ENCODE measurements at regions of chr20 and their contacts with region 1.

Region 1: GRCh38 chr20:49699200-49699992 is 14.3 kb downstream of the B4GALT5 start:
- DNase-seq: peak; percentile 67
- ATAC-seq: no peak
- H3K4me3 ChIP-seq: no peak overlapping the region
- H3K27ac ChIP-seq: no peak overlapping the region
- H3K4me1 ChIP-seq: peaks cover 12% of the 10 kb centered on the region
- H3K27me3 ChIP-seq: no peaks in the 10 kb centered on the region
- CTCF ChIP-seq: no peak
- POLR2A ChIP-seq: no peak
- RAD21 ChIP-seq: no peak

Region 2: GRCh38 chr20:49262444-49262843 is 437.0 kb before region 1 on chr20:
- CTCF ChIA-PET with region 1: no interaction called
- POLR2A ChIA-PET with region 1: interaction called, 17 read pairs
- dilution Hi-C with region 1: no loop called
- in situ Hi-C with region 1: no loop called
- intact Hi-C with region 1: no loop called
- DNase-seq: no peak
- ATAC-seq: no peak
- H3K4me3 ChIP-seq: no peak overlapping the region
- H3K27ac ChIP-seq: no peak overlapping the region
- H3K4me1 ChIP-seq: no peaks in the 10 kb centered on the region; the same call in 1 of the 2 replicates
- H3K27me3 ChIP-seq: no peaks in the 10 kb centered on the region
- CTCF ChIP-seq: no peak
- POLR2A ChIP-seq: no peak
- RAD21 ChIP-seq: no peak

Region 3: GRCh38 chr20:49559401-49560081 is 139.9 kb before region 1 on chr20:
- CTCF ChIA-PET with region 1: interaction called, 10 read pairs
- POLR2A ChIA-PET with region 1: no interaction called
- dilution Hi-C with region 1: no loop called
- in situ Hi-C with region 1: no loop called
- intact Hi-C with region 1: no loop called
- DNase-seq: no peak
- ATAC-seq: no peak
- H3K4me3 ChIP-seq: no peak overlapping the region
- H3K27ac ChIP-seq: no peak overlapping the region
- H3K4me1 ChIP-seq: peaks cover 14% of the 10 kb centered on the region
- H3K27me3 ChIP-seq: no peaks in the 10 kb centered on the region; the same call in 1 of the 2 replicates
- CTCF ChIP-seq: no peak
- POLR2A ChIP-seq: no peak
- RAD21 ChIP-seq: no peak

Region 4: GRCh38 chr20:49620364-49621240 is 78.8 kb before region 1 on chr20:
- CTCF ChIA-PET with region 1: no interaction called
- POLR2A ChIA-PET with region 1: no interaction called
- dilution Hi-C with region 1: no loop called
- in situ Hi-C with region 1: no loop called
- intact Hi-C with region 1: no loop called
- DNase-seq: no peak
- ATAC-seq: no peak
- H3K4me3 ChIP-seq: no peak overlapping the region
- H3K27ac ChIP-seq: no peak overlapping the region
- H3K4me1 ChIP-seq: no peaks in the 10 kb centered on the region
- H3K27me3 ChIP-seq: peaks cover 14% of the 10 kb centered on the region; the same call in 1 of the 2 replicates
- CTCF ChIP-seq: no peak
- POLR2A ChIP-seq: no peak
- RAD21 ChIP-seq: no peak

Measured in IMR-90 (cell line).